WTC11 (cell line): ENCODE measurements at regions of chr7 and their contacts with region 1.

Region 1: DNA sequence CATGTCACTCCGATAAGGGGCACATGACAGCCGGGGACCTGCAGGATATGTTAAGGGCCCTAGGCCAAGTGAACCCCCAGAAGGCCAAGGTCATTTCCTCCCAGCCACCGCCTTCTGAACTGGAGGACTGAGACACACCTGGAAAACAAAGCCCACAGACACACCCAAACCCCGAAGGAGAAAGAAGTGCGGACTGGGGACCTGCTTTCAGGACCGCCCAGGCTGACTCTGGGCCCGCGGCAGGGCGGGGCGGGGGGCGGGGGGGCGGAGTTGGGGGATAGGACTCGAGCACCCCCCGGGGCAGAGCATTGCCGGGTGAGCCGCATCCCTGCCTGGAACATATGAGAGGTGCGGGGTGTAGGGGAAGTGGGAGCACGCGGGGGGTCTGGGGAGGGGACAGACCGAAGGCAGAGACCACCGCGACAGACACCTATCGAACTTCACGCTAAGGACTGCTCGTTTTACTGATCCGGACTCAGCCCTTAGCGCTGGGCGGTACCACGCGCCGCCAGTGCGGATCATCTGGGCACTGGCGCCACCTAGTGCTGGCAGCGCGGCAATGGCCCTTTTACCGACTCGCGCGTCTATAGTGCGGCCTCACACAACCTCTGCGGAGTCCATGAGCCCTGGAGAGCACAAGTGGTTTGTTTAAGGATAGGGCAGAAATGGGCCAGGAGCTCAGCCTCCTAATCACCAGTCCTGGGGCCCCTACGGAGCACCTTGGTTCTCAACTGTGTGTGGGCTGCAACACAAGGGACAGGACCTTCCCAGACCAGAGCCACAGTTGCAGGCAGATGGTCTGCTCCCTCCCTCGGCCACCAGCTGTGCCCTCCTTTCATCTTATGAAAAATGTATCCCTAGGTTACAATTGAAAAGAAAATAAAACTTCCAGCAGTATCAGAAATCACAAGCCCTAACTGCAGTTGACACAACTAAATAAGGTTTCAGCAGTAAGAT is 157.6 kb downstream of the HERPUD2 start:
- DNase-seq: peak; percentile 84
- ATAC-seq: peak; percentile 96
- H3K4me3 Mint-ChIP-seq: peak overlapping the region; percentile 66
- H3K27ac Mint-ChIP-seq: no peak overlapping the region
- H3K4me1 Mint-ChIP-seq: 0 out of 2 replicates have a peak, but pooled peaks cover 3% of the 10 kb centered on the region
- H3K27me3 Mint-ChIP-seq: peaks cover 25% of the 10 kb centered on the region
- CTCF ChIP-seq: peak; percentile 88

Region 2: GRCh38 chr7:35624299-35625186 is 87.2 kb after region 1 on chr7:
- CTCF ChIA-PET with region 1: interaction called, 26 read pairs
- POLR2A ChIA-PET with region 1: no interaction called
- DNase-seq: peak; percentile 52
- ATAC-seq: peak; percentile 97
- H3K4me3 Mint-ChIP-seq: no peak overlapping the region
- H3K27ac Mint-ChIP-seq: no peak overlapping the region
- H3K4me1 Mint-ChIP-seq: peaks cover 17% of the 10 kb centered on the region
- H3K27me3 Mint-ChIP-seq: no peaks in the 10 kb centered on the region
- CTCF ChIP-seq: peak; percentile 69